ENCODE measurements at regions of chr1 and their contacts with region 1.

Region 1: DNA sequence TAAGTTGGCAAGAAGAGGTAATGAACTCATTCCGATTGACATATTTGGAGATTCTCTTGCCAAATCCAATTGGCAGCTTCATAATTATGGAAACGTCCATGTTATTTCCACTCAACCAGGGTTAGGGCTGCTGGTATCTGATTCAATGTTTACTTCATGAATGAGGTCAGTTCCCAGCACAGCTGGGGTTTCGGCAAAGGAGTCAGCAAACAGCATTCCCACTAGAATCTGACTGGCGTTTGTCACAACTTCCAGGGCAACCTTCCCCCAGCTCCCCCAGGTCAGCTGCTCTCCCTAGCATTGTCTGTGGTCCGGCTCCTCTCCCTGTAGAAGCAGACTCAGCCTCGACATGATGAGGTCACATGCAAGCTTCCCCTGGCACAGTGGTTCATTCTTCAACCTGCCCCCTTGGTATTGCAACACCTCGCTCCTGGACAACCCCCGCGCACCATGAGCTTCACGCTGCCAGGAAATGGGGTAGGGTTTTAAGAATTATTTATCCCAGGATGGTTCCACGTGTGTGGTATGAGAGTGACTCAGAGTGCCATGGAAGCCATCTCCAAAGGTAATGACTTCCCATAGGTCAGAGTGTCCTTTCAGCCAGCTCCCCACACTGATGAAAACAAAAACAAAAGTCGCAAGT is 100.7 kb upstream of the SLC25A33 start:
- DNase-seq: peak; percentile 77 to 82
- ATAC-seq: peak; percentile 46 to 51
- H3K4me3 ChIP-seq: no peak overlapping the region
- H3K27ac ChIP-seq: peak overlapping the region; percentile 61 to 96 (median 92)
- H3K4me1 ChIP-seq: peaks cover 69 to 76% of the 10 kb centered on the region in 2 donors
- H3K27me3 ChIP-seq: no peaks in the 10 kb centered on the region
- CTCF ChIP-seq: no peak
- POLR2A ChIP-seq: peak in 1 of 2 donors; percentile 28

Region 2: DNA sequence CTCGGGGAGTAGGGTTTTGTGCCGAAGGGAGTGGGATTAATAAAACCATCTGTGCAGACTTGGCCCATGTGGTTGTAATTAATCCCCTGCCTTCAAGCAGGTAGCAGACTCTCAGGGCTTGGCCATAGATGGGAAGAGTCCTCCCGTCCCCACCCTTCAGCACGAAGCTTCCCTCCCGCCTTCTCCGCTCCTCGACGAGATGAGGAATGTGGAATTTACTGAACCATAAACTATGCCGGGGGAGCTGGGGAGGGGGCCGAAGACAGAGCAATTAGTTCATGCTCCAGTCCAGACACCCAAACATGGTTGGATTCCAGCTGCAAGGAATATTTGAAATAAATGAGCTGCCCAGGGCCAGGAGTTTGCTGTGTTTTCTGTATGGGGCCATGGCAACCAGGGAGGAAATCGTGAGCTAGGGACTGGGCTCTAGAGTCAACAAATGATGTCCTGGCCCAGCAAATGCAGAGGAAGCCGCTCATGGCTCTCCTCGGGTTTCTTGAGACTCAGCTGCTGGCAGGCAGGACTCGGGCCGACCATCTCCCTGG is 67.1 kb before region 1 on chr1:
- in situ Hi-C with region 1: loop called in 2 of 4 experiments (anchors 5 to 10 kb)
- intact Hi-C with region 1: loop called (anchors 2 kb)
- DNase-seq: peak; percentile 46 to 51
- ATAC-seq: peak; percentile 29 to 36
- H3K4me3 ChIP-seq: no peak overlapping the region
- H3K27ac ChIP-seq: peak overlapping the region; percentile 48 to 69 (median 64)
- H3K4me1 ChIP-seq: peaks cover 17 to 22% of the 10 kb centered on the region in 2 donors
- H3K27me3 ChIP-seq: no peaks in the 10 kb centered on the region
- CTCF ChIP-seq: no peak
- POLR2A ChIP-seq: no peak

Region 3: GRCh38 chr1:9376886-9377333 is 61.6 kb before region 1 on chr1:
- in situ Hi-C with region 1: loop called in 2 of 4 experiments (anchors 5 to 10 kb)
- intact Hi-C with region 1: loop called (anchors 2 kb)
- DNase-seq: peak; percentile 93 to 95
- ATAC-seq: peak; percentile 94 to 95
- H3K4me3 ChIP-seq: peak overlapping the region in 2 of 4 donors; percentile 3 to 14
- H3K27ac ChIP-seq: peak overlapping the region; percentile 89 to 94 (median 92)
- H3K4me1 ChIP-seq: peaks cover 34 to 35% of the 10 kb centered on the region in 2 donors
- H3K27me3 ChIP-seq: no peaks in the 10 kb centered on the region
- CTCF ChIP-seq: peak in 1 of 5 experiments; percentile 16
- POLR2A ChIP-seq: peak; percentile 42 to 79

Region 4: DNA sequence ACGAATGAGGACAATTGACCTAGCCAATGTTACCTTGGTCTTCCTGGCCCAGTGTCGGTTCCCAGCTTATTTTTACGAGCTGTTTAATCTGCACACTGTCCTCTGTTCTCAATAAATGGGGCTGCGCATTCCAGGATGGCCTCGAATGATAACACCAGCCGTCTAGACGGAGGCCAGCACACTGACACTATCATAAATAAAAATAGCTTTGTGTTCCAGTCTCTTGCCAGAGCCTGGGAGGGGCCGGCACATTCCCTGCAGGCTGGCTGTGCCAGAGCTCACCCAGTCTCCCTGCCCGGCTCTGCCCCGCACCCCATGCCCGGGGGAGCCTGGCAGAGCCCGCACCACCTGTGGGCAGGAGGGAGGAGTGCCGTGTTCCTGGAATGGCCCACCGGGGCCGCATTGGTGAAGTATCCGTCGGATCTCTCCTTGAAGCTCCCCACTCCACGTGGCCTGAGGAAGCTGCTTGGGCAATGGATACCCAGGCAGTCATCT is 53.8 kb before region 1 on chr1:
- in situ Hi-C with region 1: loop called in 2 of 4 experiments (anchors 5 to 10 kb)
- intact Hi-C with region 1: loop called (anchors 2 kb)
- DNase-seq: peak; percentile 88 to 94
- ATAC-seq: peak; percentile 87 to 90
- H3K4me3 ChIP-seq: peak overlapping the region in 2 of 4 donors; percentile 13 to 19
- H3K27ac ChIP-seq: peak overlapping the region; percentile 87 to 96 (median 90)
- H3K4me1 ChIP-seq: peaks cover 33 to 36% of the 10 kb centered on the region in 2 donors
- H3K27me3 ChIP-seq: no peaks in the 10 kb centered on the region
- CTCF ChIP-seq: peak in 1 of 5 experiments; percentile 42
- POLR2A ChIP-seq: peak; percentile 45 to 57

Region 5: DNA sequence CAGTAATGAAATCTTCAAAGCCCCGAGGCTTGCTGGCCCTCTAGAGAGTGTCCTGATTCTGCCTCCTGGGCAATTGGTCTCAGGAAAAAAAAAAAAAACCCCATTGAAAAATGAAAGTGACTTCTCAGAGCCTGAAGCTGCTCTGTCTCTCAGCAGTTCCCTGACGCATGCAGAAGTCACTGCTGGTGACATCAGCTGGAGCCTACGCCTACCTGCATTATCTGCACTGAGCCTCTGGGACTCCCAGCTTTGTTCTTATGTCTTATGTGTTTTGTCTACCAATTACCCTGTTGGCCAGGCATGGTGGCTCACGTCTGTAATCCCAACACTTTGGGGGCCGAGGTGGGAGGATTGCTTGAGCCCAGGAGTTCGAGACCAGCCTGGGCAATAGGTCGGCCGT is 90.6 kb after region 1 on chr1:
- in situ Hi-C with region 1: no loop called
- intact Hi-C with region 1: no loop called
- DNase-seq: no peak
- ATAC-seq: no peak
- H3K4me3 ChIP-seq: no peak overlapping the region
- H3K27ac ChIP-seq: no peak overlapping the region
- H3K4me1 ChIP-seq: peaks cover 4% of the 10 kb centered on the region in 2 donors
- H3K27me3 ChIP-seq: no peaks in the 10 kb centered on the region
- CTCF ChIP-seq: no peak
- POLR2A ChIP-seq: no peak